Activated T-helper 2 cell treated with anti-CD3 and anti-CD28 coated beads, Interferon-gamma antibody, Interleukin-2, Interleukin-4, amounts not matched to agents 10 μg/mL and 5 μg/mL and 100 μg/mL, durations not matched to agents 14 hours and 24 hours and 36 hours (primary cell): ENCODE measurements at regions of chr18 and their contacts with region 1.

Region 1: GRCh38 chr18:69898241-69898861 is 49.3 kb downstream of the CD226 start:
- DNase-seq: peak; percentile 20
- H3K4me3 Mint-ChIP-seq: peak overlapping the region; percentile 84
- H3K27ac Mint-ChIP-seq: peak overlapping the region; percentile 94
- H3K4me1 Mint-ChIP-seq: peaks cover 65% of the 10 kb centered on the region
- H3K27me3 Mint-ChIP-seq: no peaks in the 10 kb centered on the region

Region 2: DNA sequence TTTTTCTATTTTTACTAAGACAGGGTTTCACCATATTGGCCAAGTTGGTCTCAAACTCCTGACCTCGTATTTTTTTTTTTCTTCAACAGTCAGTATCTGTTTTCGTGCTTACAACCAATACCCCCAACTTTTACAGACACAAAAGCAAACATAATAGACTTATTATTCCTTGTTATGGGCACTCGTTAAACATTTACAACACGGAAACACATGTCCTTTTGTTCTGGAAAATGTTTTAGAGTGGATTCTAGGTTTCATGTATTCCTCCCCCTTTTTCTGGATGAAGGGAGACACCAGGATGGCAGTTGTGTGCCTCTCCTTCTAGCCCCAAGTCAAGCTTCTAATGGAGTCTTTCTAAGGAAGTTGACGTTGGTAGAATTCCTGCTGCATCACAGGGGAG is 39.5 kb before region 1 on chr18:
- intact Hi-C with region 1: no loop called
- DNase-seq: no peak
- H3K4me3 Mint-ChIP-seq: no peak overlapping the region
- H3K27ac Mint-ChIP-seq: no peak overlapping the region
- H3K4me1 Mint-ChIP-seq: no peaks in the 10 kb centered on the region
- H3K27me3 Mint-ChIP-seq: no peaks in the 10 kb centered on the region

Region 3: GRCh38 chr18:69908838-69909237 is 10.5 kb after region 1 on chr18:
- intact Hi-C with region 1: loop called (anchors 1 kb)
- DNase-seq: no peak
- H3K4me3 Mint-ChIP-seq: no peak overlapping the region
- H3K27ac Mint-ChIP-seq: peak overlapping the region; percentile 70
- H3K4me1 Mint-ChIP-seq: peaks cover 52% of the 10 kb centered on the region
- H3K27me3 Mint-ChIP-seq: no peaks in the 10 kb centered on the region

Region 4: GRCh38 chr18:69935319-69936190 is 37.2 kb after region 1 on chr18:
- intact Hi-C with region 1: loop called (anchors 1 kb)
- DNase-seq: peak; percentile 71
- H3K4me3 Mint-ChIP-seq: no peak overlapping the region
- H3K27ac Mint-ChIP-seq: no peak overlapping the region
- H3K4me1 Mint-ChIP-seq: peaks cover 28% of the 10 kb centered on the region
- H3K27me3 Mint-ChIP-seq: no peaks in the 10 kb centered on the region

Region 5: DNA sequence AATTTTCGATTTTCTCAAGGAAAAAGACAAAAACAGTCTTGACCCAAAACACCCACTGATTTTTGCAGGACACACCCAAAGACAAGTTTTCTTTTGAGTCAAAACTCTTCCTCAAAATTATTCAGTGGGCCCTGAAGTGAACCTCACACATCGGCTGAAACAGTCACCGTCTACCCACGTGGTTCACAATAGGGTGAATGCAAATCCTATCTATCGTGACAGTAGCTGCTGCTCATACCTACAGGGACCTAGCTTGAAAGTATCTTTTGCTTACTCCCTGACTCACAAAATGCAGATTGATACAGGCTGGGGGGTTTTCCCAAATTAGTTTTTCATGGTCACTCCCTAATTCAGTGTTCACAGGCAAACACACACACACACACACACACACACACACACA is 60.1 kb after region 1 on chr18:
- intact Hi-C with region 1: loop called (anchors 1 kb)
- DNase-seq: no peak
- H3K4me3 Mint-ChIP-seq: no peak overlapping the region
- H3K27ac Mint-ChIP-seq: no peak overlapping the region
- H3K4me1 Mint-ChIP-seq: peaks cover 23% of the 10 kb centered on the region
- H3K27me3 Mint-ChIP-seq: no peaks in the 10 kb centered on the region

Region 6: GRCh38 chr18:70194227-70194890 is 296.0 kb after region 1 on chr18:
- intact Hi-C with region 1: no loop called
- DNase-seq: no peak
- H3K4me3 Mint-ChIP-seq: no peak overlapping the region
- H3K27ac Mint-ChIP-seq: peak overlapping the region; percentile 77
- H3K4me1 Mint-ChIP-seq: peaks cover 22% of the 10 kb centered on the region
- H3K27me3 Mint-ChIP-seq: no peaks in the 10 kb centered on the region

Region 7: DNA sequence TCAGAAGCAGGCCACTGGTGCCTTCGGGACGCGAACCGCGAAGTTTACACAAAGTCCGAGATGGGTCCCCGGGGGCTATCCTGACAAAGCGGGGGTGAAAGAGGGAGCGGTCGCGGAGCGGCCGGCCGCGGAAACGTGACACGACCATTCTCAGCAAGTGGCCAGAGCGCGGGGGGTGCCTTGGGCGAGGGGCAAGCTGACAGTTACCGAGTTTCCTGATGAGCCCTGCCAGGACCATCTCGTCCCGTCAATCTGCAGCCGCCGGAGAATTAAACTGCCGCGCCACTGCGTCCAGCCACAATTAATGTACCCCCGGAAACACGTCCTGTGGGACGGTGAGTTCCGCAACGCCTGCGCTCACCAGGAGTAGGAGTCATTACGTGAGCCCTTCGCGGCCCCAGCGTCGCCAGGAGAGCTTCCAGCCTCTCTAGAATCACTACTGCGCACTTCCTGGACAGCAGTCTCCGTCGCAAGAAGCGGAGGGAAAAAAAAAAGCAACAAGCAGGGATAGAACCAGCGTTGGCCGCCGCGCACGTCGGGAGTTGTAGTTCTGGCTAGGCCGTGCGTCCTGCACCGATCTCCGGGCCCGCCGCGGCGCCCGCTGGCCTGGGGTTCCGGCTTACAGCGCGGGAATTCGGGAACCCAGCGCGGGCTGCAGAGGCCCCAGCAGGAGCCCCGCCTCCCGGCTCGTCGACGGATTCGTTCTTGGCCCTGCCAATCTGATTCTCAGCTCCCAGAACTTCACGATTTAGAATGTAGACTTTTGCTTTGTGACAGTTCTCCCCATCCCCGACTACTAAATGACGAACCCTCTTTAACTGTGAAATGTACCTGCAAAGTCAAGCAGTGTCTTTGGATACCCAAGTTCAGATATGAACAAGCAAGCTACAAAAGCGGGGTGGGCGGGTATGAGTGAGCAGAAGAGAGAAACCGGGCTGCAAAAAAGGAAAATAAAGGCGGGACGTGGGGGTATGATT is 307.4 kb after region 1 on chr18 and contains the start of gene RTTN:
- intact Hi-C with region 1: loop called (anchors 5 kb)
- DNase-seq: peak; percentile 91
- H3K4me3 Mint-ChIP-seq: peak within 1 kb of the TSS; percentile 93
- H3K27ac Mint-ChIP-seq: peak within 1 kb of the TSS; percentile 98
- H3K4me1 Mint-ChIP-seq: peaks cover 22% of the 10 kb centered on the region
- H3K27me3 Mint-ChIP-seq: peaks cover 15% of the 10 kb centered on the region
- total RNA-seq, gene RTTN: 21.0 and 25.2 TPM in 2 replicates